ENCODE measurements at regions of chr5 and their contacts with region 1.

Region 1: GRCh38 chr5:157948738-157949410 is 89.9 kb upstream of the CLINT1 start:
- DNase-seq: peak; percentile 58
- H3K4me3 Mint-ChIP-seq: no peak overlapping the region
- H3K27ac Mint-ChIP-seq: no peak overlapping the region
- H3K4me1 Mint-ChIP-seq: peaks cover 5% of the 10 kb centered on the region
- H3K27me3 Mint-ChIP-seq: peaks cover 14% of the 10 kb centered on the region

Region 2: GRCh38 chr5:157917899-157918809 is 30.7 kb before region 1 on chr5:
- intact Hi-C with region 1: loop called (anchors 2 kb)
- DNase-seq: peak; percentile 33
- H3K4me3 Mint-ChIP-seq: no peak overlapping the region
- H3K27ac Mint-ChIP-seq: no peak overlapping the region
- H3K4me1 Mint-ChIP-seq: peaks cover 30% of the 10 kb centered on the region
- H3K27me3 Mint-ChIP-seq: no peaks in the 10 kb centered on the region